ENCODE measurements at regions of chr13 and their contacts with region 1.

Region 1: DNA sequence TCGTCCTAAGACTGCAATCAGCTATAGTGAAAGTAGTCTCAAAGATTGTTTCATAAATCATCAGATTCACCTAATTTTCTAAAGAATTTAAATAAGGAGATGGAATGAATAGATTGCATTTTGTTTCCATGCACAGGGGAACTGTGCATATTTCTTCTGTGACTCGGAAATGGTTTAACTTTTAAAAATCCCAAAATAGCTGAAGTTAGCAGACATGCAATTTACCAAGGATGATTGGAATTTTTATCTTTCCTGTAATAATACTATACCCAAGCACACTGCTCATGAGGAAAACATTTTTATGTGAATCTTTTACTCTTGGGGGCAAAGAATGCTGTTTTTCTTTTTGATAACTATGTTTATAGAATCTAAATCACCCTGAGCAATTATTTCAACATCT is 15.0 kb upstream of the LMO7 start:
- DNase-seq: peak; percentile 70
- ATAC-seq: peak; percentile 82
- H3K4me3 ChIP-seq: no peak overlapping the region
- H3K27ac ChIP-seq: peak overlapping the region; percentile 92; the same call in 1 of the 2 replicates
- H3K4me1 ChIP-seq: peaks cover 20% of the 10 kb centered on the region
- H3K27me3 ChIP-seq: no peaks in the 10 kb centered on the region
- CTCF ChIP-seq: no peak
- POLR2A ChIP-seq: no peak
- RAD21 ChIP-seq: no peak

Region 2: GRCh38 chr13:75161804-75162203 is 459.3 kb before region 1 on chr13:
- CTCF ChIA-PET with region 1: no interaction called
- POLR2A ChIA-PET with region 1: no interaction called
- dilution Hi-C with region 1: no loop called
- in situ Hi-C with region 1: no loop called
- intact Hi-C with region 1: no loop called
- DNase-seq: no peak
- ATAC-seq: no peak
- H3K4me3 ChIP-seq: no peak overlapping the region
- H3K27ac ChIP-seq: no peak overlapping the region
- H3K4me1 ChIP-seq: no peaks in the 10 kb centered on the region
- H3K27me3 ChIP-seq: no peaks in the 10 kb centered on the region
- CTCF ChIP-seq: no peak
- POLR2A ChIP-seq: no peak
- RAD21 ChIP-seq: no peak

Region 3: DNA sequence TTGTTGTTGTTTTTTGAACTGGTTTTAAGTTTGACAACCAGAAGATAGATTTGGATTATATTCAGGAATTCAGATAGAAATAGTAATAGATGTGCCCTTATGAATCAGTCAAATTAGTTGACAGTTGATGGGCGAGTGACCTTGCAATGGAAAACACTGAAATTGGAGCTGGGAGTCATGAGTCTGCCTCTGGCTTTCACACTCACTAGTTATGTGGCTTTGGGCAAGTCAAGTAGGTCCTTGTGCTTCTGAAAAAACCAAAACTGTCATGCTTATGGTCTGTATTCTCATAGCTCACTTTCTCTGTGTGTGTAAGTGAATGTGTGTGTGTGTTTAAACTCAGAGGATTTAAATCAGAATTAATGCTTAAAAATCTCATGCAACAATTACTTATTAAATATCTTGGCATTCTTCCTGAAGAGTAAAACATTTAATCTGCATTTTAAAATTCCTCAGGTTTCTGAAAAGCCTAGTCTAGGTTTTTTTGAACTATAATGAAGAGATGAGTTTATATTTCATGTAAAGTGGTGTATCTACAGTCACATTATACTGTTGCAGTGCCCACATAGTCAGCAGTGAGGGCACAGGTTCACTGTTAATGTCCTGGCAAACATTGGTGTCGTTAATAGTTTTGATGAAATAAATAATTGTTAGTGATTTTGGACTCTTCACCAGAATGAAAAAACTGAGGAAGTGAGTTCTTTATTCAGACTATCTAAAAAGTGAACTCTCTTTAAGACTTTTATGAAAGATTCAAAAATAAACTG is 39.1 kb before region 1 on chr13:
- CTCF ChIA-PET with region 1: no interaction called
- POLR2A ChIA-PET with region 1: no interaction called
- dilution Hi-C with region 1: no loop called
- in situ Hi-C with region 1: no loop called
- intact Hi-C with region 1: loop called (anchors 5 kb)
- DNase-seq: peak; percentile 18
- ATAC-seq: no peak; the same call in 1 of the 2 replicates
- H3K4me3 ChIP-seq: no peak overlapping the region
- H3K27ac ChIP-seq: no peak overlapping the region
- H3K4me1 ChIP-seq: no peaks in the 10 kb centered on the region
- H3K27me3 ChIP-seq: no peaks in the 10 kb centered on the region
- CTCF ChIP-seq: no peak
- POLR2A ChIP-seq: no peak
- RAD21 ChIP-seq: no peak